Esophagus muscularis mucosa (tissue), 4 donors: ENCODE measurements at regions of chr17 and their contacts with region 1.

Region 1: DNA sequence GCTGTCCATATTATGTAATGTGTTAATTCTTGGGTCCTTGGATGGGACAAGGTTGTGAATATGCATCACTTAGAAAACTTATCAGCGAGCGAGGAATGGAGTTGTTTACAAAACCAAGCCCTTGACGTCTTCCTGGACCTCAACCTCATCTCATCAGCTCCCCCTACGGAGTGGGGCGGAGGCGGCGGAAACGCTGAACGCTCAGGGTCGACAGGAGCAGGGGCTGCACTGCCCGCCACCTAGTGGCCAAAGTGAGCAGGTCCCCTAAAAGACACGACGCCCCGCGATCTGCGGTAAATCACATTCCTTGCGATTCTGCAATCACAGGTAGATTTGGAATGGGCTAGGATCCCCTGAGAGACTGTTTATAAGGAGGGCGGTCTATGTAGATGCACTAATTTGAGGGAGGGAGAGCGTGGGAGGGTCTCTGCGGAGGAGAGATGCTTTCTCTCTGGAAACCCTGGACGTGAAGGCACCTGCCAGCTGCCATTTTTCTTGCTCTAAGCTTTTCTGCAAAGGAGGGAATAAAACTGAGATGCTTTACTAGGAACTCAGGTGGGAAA is 5.4 kb upstream of the ICAM2 start:
- DNase-seq: no peak
- H3K4me3 ChIP-seq: peak overlapping the region; percentile 9 to 47 (median 17)
- H3K27ac ChIP-seq: no peak overlapping the region
- H3K4me1 ChIP-seq: peaks cover 3 to 14% (median 11%) of the 10 kb centered on the region in 4 donors
- H3K27me3 ChIP-seq: peaks cover 0 to 6% (median 2%) of the 10 kb centered on the region in 4 donors
- CTCF ChIP-seq: peak; percentile 81 to 97 (median 87)
- EP300 ChIP-seq: no peak
- POLR2A ChIP-seq: no peak

Region 2: GRCh38 chr17:63919311-63919723 is 106.5 kb before region 1 on chr17:
- intact Hi-C with region 1: loop called (anchors 1 kb)
- DNase-seq: no peak
- H3K4me3 ChIP-seq: no peak overlapping the region
- H3K27ac ChIP-seq: no peak overlapping the region
- H3K4me1 ChIP-seq: peaks cover 0 to 7% (median 3%) of the 10 kb centered on the region in 4 donors
- H3K27me3 ChIP-seq: peaks cover 0 to 13% (median 0%) of the 10 kb centered on the region in 4 donors
- CTCF ChIP-seq: peak; percentile 82 to 94 (median 88)
- EP300 ChIP-seq: no peak
- POLR2A ChIP-seq: no peak

Region 3: GRCh38 chr17:64213995-64214811 is 188.4 kb after region 1 on chr17:
- intact Hi-C with region 1: no loop called
- DNase-seq: no peak
- H3K4me3 ChIP-seq: no peak overlapping the region
- H3K27ac ChIP-seq: no peak overlapping the region
- H3K4me1 ChIP-seq: peaks cover 26 to 42% (median 38%) of the 10 kb centered on the region in 4 donors
- H3K27me3 ChIP-seq: no peaks in the 10 kb centered on the region
- CTCF ChIP-seq: no peak
- EP300 ChIP-seq: no peak
- POLR2A ChIP-seq: no peak